Naive thymus-derived CD4-positive, alpha-beta T cell (primary cell): ENCODE measurements at regions of chr5 and their contacts with region 1.

Region 1: GRCh38 chr5:39948867-39949468 is 524.2 kb upstream of the DAB2 start:
- DNase-seq: peak in 8 of 9 donors; percentile 30 to 74 (median 63)
- ATAC-seq: peak; percentile 91
- H3K4me3 ChIP-seq: no peak overlapping the region
- H3K4me3 Mint-ChIP-seq: no peak overlapping the region
- H3K27ac ChIP-seq: no peak overlapping the region
- H3K27ac Mint-ChIP-seq: no peak overlapping the region
- H3K4me1 ChIP-seq: no peaks in the 10 kb centered on the region
- H3K4me1 Mint-ChIP-seq: peaks cover 0 to 4% (median 0%) of the 10 kb centered on the region in 7 donors
- H3K27me3 ChIP-seq: no peaks in the 10 kb centered on the region
- H3K27me3 Mint-ChIP-seq: no peaks in the 10 kb centered on the region

Region 2: DNA sequence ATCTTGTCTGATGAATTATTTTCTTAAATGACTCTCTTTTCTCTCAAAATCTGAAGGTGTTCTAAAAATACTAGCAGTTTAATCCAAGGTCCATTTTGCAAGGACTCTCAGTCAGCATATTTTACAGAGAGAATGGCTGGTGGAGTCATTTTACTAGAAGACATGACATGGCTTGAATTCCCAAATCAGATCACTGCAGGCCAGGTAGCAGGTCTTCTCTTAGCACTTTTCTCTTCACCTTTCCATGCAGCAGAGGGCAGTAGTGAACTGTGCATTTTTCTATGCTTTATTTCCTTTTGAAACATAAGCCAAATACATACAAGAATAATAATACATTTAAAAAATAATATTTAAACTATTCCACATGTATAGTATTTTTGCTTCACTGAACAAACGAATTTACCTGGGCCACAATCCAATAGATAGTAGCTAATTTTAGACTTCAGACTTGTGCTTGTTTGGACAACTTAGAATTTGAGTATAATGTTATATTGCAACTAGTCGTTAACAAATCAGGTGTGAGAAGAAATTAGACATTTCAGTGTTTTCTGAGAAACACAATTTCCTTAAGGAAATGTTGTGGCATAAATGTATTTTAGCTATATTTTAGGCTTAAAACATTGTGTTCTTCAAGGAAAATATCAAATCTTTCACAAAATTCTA is 234.8 kb before region 1 on chr5:
- CTCF ChIA-PET with region 1: no interaction called
- POLR2A ChIA-PET with region 1: no interaction called
- intact Hi-C with region 1: loop called in 1 of 2 experiments (anchors 2 kb)
- DNase-seq: peak in 7 of 9 donors; percentile 4 to 51 (median 33)
- ATAC-seq: peak; percentile 63
- H3K4me3 ChIP-seq: no peak overlapping the region
- H3K4me3 Mint-ChIP-seq: no peak overlapping the region
- H3K27ac ChIP-seq: no peak overlapping the region
- H3K27ac Mint-ChIP-seq: no peak overlapping the region
- H3K4me1 ChIP-seq: no peaks in the 10 kb centered on the region
- H3K4me1 Mint-ChIP-seq: no peaks in the 10 kb centered on the region
- H3K27me3 ChIP-seq: no peaks in the 10 kb centered on the region
- H3K27me3 Mint-ChIP-seq: peaks cover 2 to 12% (median 9%) of the 10 kb centered on the region in 5 donors

Region 3: DNA sequence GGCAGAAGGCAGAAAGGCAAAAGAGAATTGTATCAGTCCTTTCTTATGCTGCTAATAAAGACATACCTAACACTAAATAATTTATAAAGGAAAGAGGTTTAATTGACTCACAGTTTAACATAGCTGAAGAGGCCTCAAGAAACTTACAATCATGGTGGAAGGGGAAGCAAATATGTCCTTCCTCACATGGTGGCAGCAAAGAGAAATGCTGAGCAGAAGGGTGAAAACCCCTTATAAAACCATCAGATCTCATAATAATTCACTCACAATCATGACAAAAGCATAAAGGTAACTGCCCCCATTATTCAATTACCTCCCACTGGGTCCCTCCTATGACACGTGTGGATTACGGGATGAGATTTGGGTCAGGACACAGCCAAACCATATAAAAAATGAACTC is 418.3 kb after region 1 on chr5:
- CTCF ChIA-PET with region 1: no interaction called
- POLR2A ChIA-PET with region 1: no interaction called
- intact Hi-C with region 1: loop called in 1 of 2 experiments (anchors 2 kb)
- DNase-seq: peak in 7 of 9 donors; percentile 18 to 53 (median 38)
- ATAC-seq: peak; percentile 54
- H3K4me3 ChIP-seq: no peak overlapping the region
- H3K4me3 Mint-ChIP-seq: no peak overlapping the region
- H3K27ac ChIP-seq: no peak overlapping the region
- H3K27ac Mint-ChIP-seq: peak overlapping the region in 6 of 9 donors; percentile 19 to 86 (median 66)
- H3K4me1 ChIP-seq: peaks cover 0 to under 1% of the 10 kb centered on the region in 2 donors
- H3K4me1 Mint-ChIP-seq: peaks cover 0 to 17% (median 8%) of the 10 kb centered on the region in 7 donors
- H3K27me3 ChIP-seq: no peaks in the 10 kb centered on the region
- H3K27me3 Mint-ChIP-seq: no peaks in the 10 kb centered on the region

Region 4: DNA sequence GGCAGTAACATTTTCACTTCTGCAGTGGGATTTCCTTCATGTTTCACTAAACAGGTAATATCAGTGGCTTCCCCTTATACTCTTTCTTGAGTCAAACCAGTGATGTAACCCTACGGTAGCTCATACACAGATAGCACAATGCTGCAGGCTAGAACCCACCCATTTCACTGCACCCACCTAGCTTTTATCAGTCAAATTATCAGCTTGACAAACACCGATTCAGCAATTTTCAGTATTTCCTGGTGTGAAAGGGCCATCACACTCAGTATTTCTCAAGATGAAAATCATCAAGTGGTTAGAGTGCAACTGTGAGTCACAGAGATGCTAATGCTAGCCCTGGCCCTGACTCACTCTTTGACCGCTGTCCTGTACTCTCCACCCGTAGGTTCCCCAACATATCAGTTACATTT is 488.5 kb after region 1 on chr5:
- CTCF ChIA-PET with region 1: no interaction called
- POLR2A ChIA-PET with region 1: no interaction called
- intact Hi-C with region 1: loop called (anchors 1 to 5 kb)
- DNase-seq: peak in 1 of 9 donors; percentile 7
- ATAC-seq: peak; percentile 67
- H3K4me3 ChIP-seq: peak overlapping the region; percentile 24
- H3K4me3 Mint-ChIP-seq: peak overlapping the region in 6 of 10 donors; percentile 10 to 75 (median 38)
- H3K27ac ChIP-seq: peak overlapping the region; percentile 79
- H3K27ac Mint-ChIP-seq: peak overlapping the region; percentile 71 to 96 (median 91)
- H3K4me1 ChIP-seq: peaks cover 34 to 39% of the 10 kb centered on the region in 2 donors
- H3K4me1 Mint-ChIP-seq: peaks cover 23 to 82% (median 68%) of the 10 kb centered on the region in 7 donors
- H3K27me3 ChIP-seq: no peaks in the 10 kb centered on the region
- H3K27me3 Mint-ChIP-seq: no peaks in the 10 kb centered on the region

Region 5: GRCh38 chr5:40716000-40716399 is 767.0 kb after region 1 on chr5:
- CTCF ChIA-PET with region 1: interaction called, 3 read pairs
- POLR2A ChIA-PET with region 1: no interaction called
- intact Hi-C with region 1: loop called in 1 of 2 experiments (anchors 1 kb)
- DNase-seq: no peak
- ATAC-seq: no peak
- H3K4me3 ChIP-seq: no peak overlapping the region
- H3K4me3 Mint-ChIP-seq: no peak overlapping the region
- H3K27ac ChIP-seq: no peak overlapping the region
- H3K27ac Mint-ChIP-seq: no peak overlapping the region
- H3K4me1 ChIP-seq: no peaks in the 10 kb centered on the region
- H3K4me1 Mint-ChIP-seq: peaks cover 0 to 11% (median 6%) of the 10 kb centered on the region in 7 donors
- H3K27me3 ChIP-seq: no peaks in the 10 kb centered on the region
- H3K27me3 Mint-ChIP-seq: no peaks in the 10 kb centered on the region

Region 6: DNA sequence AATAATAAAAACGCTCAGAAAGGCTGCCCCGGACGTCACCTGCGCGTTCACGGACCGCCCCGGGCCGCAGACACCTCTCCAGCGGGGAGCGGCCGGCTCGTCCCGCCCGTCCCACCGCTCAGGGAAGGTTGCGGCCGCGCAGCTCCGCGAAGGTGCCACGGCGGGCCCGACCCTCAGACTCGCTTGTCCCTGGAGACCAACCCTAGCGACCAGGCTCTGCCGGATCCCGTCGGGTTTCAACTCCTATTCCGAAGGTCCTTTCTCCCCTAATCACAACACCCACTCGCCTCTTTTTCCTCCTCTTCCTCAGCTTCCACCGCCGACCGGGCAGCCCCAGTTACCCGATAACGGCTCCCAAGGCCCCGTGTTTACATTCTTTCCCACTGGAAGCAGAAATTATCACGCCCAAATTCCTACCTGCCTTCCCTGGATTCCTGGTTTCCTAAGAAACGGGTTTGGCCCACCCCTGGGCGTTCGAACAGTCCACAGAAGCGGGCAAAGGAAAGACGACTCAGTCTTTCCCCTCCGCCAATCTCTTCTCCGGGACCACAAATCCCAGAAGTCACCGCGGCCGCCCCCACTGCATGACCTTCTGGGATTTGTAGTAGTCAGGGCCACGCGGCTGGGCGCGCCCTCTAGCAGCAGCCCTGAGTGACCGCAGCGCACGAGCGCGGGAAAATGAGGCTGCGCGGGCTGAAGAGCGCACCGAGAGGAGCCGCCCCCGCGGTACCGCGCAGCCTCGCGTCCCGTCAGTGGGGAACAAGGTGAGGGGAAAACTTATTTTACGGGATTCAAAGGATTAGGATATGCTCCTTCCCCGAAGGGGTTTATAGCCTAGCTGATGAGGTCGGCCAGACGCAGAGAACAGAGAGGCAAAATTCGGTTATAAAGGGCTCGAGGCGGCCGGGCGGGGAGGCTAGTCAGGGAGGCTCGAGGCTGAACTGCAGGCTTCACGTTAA is 806.7 kb after region 1 on chr5 and contains the start of gene TTC33:
- CTCF ChIA-PET with region 1: no interaction called
- POLR2A ChIA-PET with region 1: no interaction called
- intact Hi-C with region 1: loop called (anchors 1 to 5 kb)
- DNase-seq: peak; percentile 84 to 95 (median 91)
- ATAC-seq: peak; percentile 95
- H3K4me3 ChIP-seq: peak within 1 kb of the TSS; percentile 95
- H3K4me3 Mint-ChIP-seq: no peak within 1 kb of the TSS
- H3K27ac ChIP-seq: peak within 1 kb of the TSS; percentile 89
- H3K27ac Mint-ChIP-seq: peak within 1 kb of the TSS in 1 of 9 donors; percentile 32
- H3K4me1 ChIP-seq: peaks cover 9 to 11% of the 10 kb centered on the region in 2 donors
- H3K4me1 Mint-ChIP-seq: peaks cover 0 to 34% (median 17%) of the 10 kb centered on the region in 7 donors
- H3K27me3 ChIP-seq: no peaks in the 10 kb centered on the region
- H3K27me3 Mint-ChIP-seq: no peaks in the 10 kb centered on the region
- total RNA-seq, gene TTC33: 7.0 to 17.2 (median 14.0) TPM